GM10248 (cell line): ENCODE measurements at regions of chr22 and their contacts with region 1.

Region 1: GRCh38 chr22:23849009-23850006 is 8.4 kb upstream of the SLC2A11 start:
- DNase-seq: peak; percentile 89
- CTCF ChIP-seq: peak; percentile 83

Region 2: DNA sequence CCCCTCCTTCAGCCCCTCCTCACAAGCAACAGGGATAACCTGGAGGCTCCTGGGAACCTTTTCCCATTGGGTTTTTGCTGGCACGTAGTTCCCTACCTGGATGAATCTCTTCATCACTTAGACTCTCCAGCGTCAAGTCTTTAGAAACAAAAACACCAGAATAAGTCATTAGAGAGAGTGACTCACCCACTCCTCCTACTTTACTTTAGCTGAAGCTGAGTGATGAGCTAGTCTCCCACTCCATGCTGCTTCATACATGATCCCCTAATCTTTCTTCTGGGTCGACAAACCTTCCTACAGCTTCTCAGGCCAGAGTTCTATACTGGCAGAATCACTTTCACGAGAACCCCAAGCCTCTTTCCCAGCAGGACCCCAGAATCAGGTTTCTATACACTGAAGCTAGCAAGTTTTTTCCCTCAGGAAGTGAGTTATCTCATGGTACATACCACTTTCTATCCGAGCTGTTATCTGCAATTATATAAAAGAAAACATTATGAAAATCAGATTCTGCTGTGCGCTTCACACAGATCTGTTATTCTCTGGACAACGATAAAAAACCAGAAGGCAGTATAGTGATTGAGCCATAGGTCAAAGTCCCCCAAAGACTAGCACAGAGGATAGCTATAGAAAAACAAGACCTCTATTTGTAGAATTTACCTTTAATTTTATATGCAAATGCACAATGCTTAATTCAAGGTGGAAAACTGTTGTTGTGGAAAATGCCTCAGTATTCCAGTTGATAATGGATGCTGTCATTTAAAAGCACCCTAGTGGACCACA is 235.9 kb before region 1 on chr22:
- CTCF ChIA-PET with region 1: no interaction called
- POLR2A ChIA-PET with region 1: no interaction called
- DNase-seq: no peak
- CTCF ChIP-seq: no peak

Region 3: DNA sequence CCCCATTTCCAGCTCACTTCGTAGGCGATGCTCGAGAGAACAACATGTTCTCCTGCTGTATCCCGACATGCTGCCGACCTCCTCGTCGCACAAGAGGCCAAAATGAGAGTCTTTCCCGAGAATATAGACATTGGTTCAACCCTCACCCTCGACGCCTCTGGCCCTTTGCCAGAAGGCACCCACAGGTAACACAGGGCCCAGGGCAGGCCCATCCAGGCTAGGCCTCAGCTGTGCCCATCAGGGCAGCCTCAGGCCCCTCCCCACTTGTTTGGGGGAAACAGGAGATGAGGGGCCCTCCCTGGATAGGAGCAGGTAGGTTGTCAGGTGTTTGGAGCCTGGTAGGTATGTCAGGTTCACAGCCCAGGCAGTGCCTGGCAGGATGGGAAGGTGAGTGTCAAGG is 161.2 kb before region 1 on chr22:
- CTCF ChIA-PET with region 1: no interaction called
- POLR2A ChIA-PET with region 1: no interaction called
- DNase-seq: no peak
- CTCF ChIP-seq: no peak

Region 4: GRCh38 chr22:23749841-23750301 is 99.4 kb before region 1 on chr22:
- CTCF ChIA-PET with region 1: interaction called, 10 read pairs
- POLR2A ChIA-PET with region 1: no interaction called
- DNase-seq: no peak
- CTCF ChIP-seq: no peak

Region 5: DNA sequence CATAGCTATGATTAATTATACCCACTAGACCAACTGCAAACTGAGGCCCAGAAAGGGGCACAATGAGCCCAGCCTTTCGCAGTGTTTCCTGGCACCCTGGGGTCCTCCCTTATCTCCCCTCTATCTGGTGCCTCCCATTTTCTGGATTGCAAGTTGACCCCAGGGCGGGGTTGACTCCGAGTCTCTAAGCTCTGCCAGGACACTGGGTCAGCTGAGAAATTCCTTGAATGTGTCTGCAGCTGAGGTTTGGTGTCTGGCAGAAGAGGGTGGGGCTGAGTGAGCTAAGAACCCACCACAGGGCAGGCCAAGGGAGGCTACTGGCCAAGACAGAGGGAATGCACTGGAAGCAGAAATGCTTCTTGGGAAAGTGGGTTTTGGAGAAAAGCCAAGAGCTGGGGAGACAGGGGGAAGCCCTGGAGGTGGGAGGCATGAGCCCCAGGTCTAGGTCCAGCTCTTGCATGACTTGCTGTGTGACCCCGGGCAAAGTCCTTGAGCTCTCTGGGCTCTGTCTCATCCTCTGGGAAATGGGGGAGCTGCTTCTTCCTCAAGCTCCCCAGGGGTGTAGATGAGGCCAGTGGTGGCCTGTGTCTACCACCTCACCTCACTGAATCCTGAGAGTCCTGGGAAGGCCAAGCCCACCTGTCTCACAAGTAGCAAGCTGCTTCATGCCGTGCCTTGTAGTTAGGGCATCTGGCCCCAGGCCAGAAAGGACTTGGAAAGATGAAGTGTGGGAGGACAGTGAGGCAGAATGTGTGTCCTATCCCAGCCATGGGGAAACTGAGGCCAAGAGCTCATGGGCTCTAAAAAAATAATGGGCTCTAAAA is 74.4 kb before region 1 on chr22:
- CTCF ChIA-PET with region 1: interaction called, 71 read pairs
- POLR2A ChIA-PET with region 1: no interaction called
- DNase-seq: no peak
- CTCF ChIP-seq: no peak

Region 6: DNA sequence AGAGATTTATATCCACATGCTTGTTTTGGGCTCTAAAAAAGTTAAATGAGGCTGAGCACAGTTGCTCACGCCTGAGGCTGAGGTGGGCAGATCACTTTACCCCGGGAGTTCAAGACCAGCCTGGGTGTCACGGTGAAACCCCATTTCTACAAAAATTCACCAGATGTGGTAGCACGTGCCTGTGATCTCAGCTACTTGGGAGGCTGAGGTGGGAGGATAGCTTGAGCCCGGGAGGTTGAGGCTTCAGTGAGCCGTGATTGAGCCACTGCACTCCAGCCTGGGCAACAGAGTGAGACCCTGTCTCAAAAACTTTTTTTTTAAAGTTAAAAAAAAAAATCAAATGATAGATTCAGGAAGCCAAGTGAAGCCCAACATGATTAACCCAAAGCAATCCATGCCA is 42.0 kb before region 1 on chr22:
- CTCF ChIA-PET with region 1: interaction called, 11 read pairs
- POLR2A ChIA-PET with region 1: no interaction called
- DNase-seq: no peak
- CTCF ChIP-seq: no peak

Region 7: DNA sequence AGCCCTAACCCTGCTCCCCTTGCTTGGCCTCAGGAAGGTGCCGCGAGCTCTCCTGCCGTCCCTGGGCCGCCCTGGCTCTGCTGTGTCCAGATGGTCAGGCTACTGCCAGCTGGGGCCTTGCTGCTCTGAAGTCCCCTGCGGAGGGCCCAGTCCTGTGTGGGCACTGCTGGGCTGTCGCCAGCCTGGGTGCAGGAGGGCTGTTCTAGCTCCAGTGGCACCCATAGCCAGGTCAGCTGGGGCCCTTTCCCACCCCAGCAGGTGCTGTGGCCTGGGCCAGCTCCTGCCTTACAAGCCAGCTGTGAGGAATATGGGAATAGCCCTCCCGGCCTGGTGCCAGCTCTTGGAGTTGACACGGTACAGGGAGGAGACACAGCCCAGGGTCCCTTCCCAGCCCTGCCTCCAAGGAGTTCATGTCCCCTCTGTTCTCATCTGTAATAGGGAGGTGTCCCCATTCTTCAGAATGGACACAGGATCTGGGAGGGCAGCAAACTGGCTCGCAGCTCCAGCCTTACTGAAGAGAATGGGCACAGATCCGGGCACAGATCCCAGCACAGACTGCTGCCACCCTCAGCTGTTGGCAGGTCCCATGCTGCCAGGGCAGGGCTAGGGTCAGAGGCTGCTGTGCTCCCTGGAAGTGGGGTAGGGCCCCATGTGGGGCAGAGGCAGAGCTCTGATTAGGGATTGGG is 14.4 kb before region 1 on chr22:
- CTCF ChIA-PET with region 1: interaction called, 22 read pairs
- POLR2A ChIA-PET with region 1: no interaction called
- DNase-seq: no peak
- CTCF ChIP-seq: no peak

Region 8: DNA sequence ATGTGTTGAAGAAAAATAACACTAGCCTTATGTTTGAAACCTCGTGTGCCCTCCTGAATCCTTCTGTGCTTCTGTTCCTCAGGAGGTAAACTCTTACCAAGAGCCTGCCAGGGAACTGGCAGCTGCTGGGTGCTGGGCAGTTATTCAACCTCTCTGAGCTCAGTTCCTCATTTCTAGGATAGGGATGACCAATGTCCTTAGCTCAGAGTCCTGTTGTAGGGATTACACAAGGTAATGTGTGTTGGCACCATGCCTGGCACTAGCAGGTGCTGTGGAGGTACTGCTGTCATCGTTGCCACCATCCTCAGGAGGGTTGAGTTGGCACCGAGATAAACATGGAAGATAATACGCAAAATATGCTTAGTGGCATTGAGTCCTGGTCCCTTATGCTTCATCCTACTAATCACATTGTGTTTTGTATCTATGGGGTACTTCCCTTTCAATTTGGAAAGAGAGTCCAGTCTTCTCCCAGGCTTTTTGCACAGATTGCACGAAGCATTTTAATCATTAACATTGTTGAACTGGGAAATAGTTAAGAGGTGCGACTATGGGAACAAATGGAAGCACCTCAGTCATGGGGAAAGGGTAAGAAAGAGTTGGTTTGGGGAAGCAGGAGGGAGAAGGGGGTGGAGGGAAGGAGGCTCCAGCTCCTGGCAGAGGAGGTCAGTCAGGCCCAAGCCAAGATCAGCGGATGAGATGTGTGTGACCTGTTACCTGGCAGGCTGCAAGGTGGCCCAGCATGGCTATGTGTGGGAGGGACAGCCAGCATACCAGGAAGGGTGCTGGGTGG is 218.5 kb after region 1 on chr22:
- CTCF ChIA-PET with region 1: no interaction called
- POLR2A ChIA-PET with region 1: no interaction called
- DNase-seq: no peak
- CTCF ChIP-seq: no peak